Head of caudate nucleus (tissue), 42 donors: ENCODE measurements at regions of chr7 and their contacts with region 1.

Region 1: DNA sequence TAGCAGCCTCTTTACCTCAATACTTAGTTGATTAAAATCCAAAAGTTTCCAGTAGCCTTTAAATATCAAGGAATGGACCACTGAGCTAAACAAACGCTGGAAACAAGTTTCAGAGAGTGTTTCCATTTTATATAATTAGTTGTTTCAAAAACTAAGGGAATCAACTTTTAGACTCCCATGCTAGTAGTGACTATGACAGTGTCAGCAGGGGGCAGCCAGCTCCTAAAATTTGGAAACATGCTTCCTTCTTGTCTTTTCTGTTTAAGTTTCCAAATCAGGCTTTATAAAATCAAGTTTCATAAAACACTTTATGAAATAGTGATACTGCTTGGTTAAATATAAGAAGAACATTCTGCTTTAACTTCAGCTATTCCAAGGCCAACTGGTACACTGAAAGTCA is 138.2 kb upstream of the TMEM229A start:
- DNase-seq: peak; percentile 29 to 88 (median 72)

Region 2: GRCh38 chr7:124009321-124009720 is 161.7 kb before region 1 on chr7:
- intact Hi-C with region 1: no loop called
- DNase-seq: no peak

Region 3: DNA sequence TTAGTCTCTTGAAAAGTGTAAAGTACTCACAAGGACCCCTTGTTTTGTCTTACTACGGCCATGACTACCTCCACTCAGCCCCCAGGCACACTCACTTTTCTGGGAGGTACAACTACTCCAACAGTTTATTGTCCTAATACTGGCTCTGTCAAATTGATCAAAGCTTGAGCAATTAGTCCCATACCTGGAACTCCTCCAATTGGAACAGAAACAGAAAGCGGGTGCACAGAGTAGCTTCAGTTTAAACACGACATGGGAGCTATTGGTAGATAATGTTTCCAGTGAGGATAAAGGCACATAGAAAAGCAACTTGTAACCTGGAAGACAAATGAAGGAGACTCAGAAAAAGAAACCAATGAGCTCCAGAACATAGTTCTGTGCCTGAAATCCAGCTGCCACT is 602.3 kb after region 1 on chr7:
- intact Hi-C with region 1: loop called (anchors 5 kb)
- DNase-seq: no peak